Calu3 (cell line): ENCODE measurements at regions of chr18 and their contacts with region 1.

Region 1: GRCh38 chr18:64027931-64028695 is 58.2 kb downstream of the SERPINB8 start:
- DNase-seq: no peak
- H3K4me3 Mint-ChIP-seq: no peak overlapping the region
- H3K27ac Mint-ChIP-seq: no peak overlapping the region
- H3K4me1 Mint-ChIP-seq: no peaks in the 10 kb centered on the region
- H3K27me3 Mint-ChIP-seq: no peaks in the 10 kb centered on the region
- CTCF ChIP-seq: no peak

Region 2: DNA sequence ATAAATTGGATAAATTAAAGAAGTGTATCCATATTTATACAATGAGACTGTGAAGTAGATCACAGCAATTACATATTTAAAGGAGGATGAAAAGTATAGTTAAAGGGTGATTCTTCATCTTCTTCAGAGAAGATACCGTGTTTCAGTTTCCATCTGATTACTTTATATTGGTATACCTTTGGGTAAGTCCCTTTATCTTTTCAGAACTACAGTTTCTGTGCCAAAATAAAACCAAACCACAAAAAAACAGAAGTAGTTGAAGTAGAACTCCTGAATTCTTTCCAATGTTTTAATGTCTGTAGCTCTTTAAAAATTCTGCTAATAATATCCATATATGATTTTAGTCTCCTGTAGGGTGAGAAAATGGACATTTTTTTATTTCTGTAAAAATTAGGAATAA is 352.0 kb after region 1 on chr18:
- CTCF ChIA-PET with region 1: no interaction called
- intact Hi-C with region 1: loop called (anchors 1 kb)
- DNase-seq: no peak
- H3K4me3 Mint-ChIP-seq: no peak overlapping the region
- H3K27ac Mint-ChIP-seq: no peak overlapping the region
- H3K4me1 Mint-ChIP-seq: peaks cover 8% of the 10 kb centered on the region
- H3K27me3 Mint-ChIP-seq: no peaks in the 10 kb centered on the region
- CTCF ChIP-seq: no peak